Naive thymus-derived CD4-positive, alpha-beta T cell (primary cell): ENCODE measurements at regions of chr9 and their contacts with region 1.

Region 1: GRCh38 chr9:124126571-124127289 is 115.2 kb downstream of the LHX2 start:
- DNase-seq: peak; percentile 23 to 82 (median 58)
- ATAC-seq: peak; percentile 62
- H3K4me3 ChIP-seq: no peak overlapping the region
- H3K4me3 Mint-ChIP-seq: no peak overlapping the region
- H3K27ac ChIP-seq: no peak overlapping the region
- H3K27ac Mint-ChIP-seq: peak overlapping the region in 2 of 9 donors; percentile 28 to 34
- H3K4me1 ChIP-seq: no peaks in the 10 kb centered on the region
- H3K4me1 Mint-ChIP-seq: peaks cover 0 to 6% (median 0%) of the 10 kb centered on the region in 7 donors
- H3K27me3 ChIP-seq: no peaks in the 10 kb centered on the region
- H3K27me3 Mint-ChIP-seq: peaks cover 6 to 12% (median 6%) of the 10 kb centered on the region in 5 donors

Region 2: DNA sequence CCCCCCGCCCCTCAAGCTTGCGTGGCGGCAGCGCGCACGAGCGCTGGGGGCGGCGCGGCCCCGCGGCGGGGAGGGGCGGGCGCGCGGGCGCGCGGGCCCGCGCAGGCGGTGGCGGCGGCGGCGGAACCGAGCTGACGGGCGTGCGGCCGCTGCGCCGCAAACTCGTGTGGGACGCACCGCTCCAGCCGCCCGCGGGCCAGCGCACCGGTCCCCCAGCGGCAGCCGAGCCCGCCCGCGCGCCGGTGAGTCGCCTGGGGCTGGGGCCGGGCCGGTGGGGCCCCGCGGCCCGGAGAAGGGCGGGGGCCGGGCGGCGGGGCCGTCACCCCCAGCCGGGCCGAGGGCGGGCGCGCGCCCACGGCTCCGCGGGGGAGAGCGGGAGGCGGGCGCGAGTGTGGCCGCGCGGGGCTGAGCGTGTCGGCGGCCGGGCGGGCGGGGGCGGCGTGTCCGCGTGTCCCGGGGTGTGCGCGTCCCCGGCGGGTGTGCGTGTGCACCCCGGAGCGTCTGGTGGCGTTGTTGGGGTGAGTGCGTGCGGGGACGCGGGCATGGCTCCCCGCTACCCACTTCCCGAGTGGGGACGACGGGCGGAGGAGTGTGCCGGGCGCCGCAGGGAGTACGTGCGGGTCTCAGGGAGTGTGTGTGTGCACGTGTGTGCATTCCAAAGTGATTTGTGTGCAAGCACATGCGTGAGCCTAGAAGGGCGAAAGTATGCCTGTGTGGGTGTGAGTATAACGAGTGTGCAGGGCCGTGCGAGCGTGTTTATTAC is 131.3 kb after region 1 on chr9 and contains the start of gene NEK6:
- CTCF ChIA-PET with region 1: no interaction called
- POLR2A ChIA-PET with region 1: no interaction called
- intact Hi-C with region 1: loop called in 1 of 2 experiments (anchors 2 kb)
- DNase-seq: peak in 3 of 9 donors; percentile 11 to 63 (median 39)
- ATAC-seq: peak; percentile 73
- H3K4me3 ChIP-seq: peak within 1 kb of the TSS; percentile 51
- H3K4me3 Mint-ChIP-seq: peak within 1 kb of the TSS; percentile 74 to 98 (median 87)
- H3K27ac ChIP-seq: no peak within 1 kb of the TSS
- H3K27ac Mint-ChIP-seq: peak within 1 kb of the TSS in 5 of 9 donors; percentile 8 to 76 (median 64)
- H3K4me1 ChIP-seq: peaks cover 4 to 12% of the 10 kb centered on the region in 2 donors
- H3K4me1 Mint-ChIP-seq: peaks cover 9 to 46% (median 16%) of the 10 kb centered on the region in 7 donors
- H3K27me3 ChIP-seq: no peaks in the 10 kb centered on the region
- H3K27me3 Mint-ChIP-seq: peaks cover 15 to 50% (median 42%) of the 10 kb centered on the region in 5 donors
- total RNA-seq, gene NEK6: 1.9 to 32.8 (median 2.8) TPM

Region 3: GRCh38 chr9:124320062-124320973 is 193.6 kb after region 1 on chr9:
- CTCF ChIA-PET with region 1: no interaction called
- POLR2A ChIA-PET with region 1: no interaction called
- intact Hi-C with region 1: loop called (anchors 1 to 2 kb)
- DNase-seq: peak in 1 of 9 donors; percentile 51
- ATAC-seq: peak; percentile 61
- H3K4me3 ChIP-seq: no peak overlapping the region
- H3K4me3 Mint-ChIP-seq: no peak overlapping the region
- H3K27ac ChIP-seq: no peak overlapping the region
- H3K27ac Mint-ChIP-seq: no peak overlapping the region
- H3K4me1 ChIP-seq: no peaks in the 10 kb centered on the region
- H3K4me1 Mint-ChIP-seq: peaks cover 0 to 3% (median 0%) of the 10 kb centered on the region in 7 donors
- H3K27me3 ChIP-seq: no peaks in the 10 kb centered on the region
- H3K27me3 Mint-ChIP-seq: no peaks in the 10 kb centered on the region

Region 4: GRCh38 chr9:124386201-124386600 is 259.5 kb after region 1 on chr9:
- CTCF ChIA-PET with region 1: no interaction called
- POLR2A ChIA-PET with region 1: no interaction called
- intact Hi-C with region 1: loop called in 1 of 2 experiments (anchors 2 kb)
- DNase-seq: no peak
- ATAC-seq: no peak
- H3K4me3 ChIP-seq: no peak overlapping the region
- H3K4me3 Mint-ChIP-seq: no peak overlapping the region
- H3K27ac ChIP-seq: no peak overlapping the region
- H3K27ac Mint-ChIP-seq: no peak overlapping the region
- H3K4me1 ChIP-seq: no peaks in the 10 kb centered on the region
- H3K4me1 Mint-ChIP-seq: peaks cover 24 to 52% (median 44%) of the 10 kb centered on the region in 7 donors
- H3K27me3 ChIP-seq: no peaks in the 10 kb centered on the region
- H3K27me3 Mint-ChIP-seq: no peaks in the 10 kb centered on the region

Region 5: GRCh38 chr9:124394596-124394995 is 267.9 kb after region 1 on chr9:
- CTCF ChIA-PET with region 1: no interaction called
- POLR2A ChIA-PET with region 1: interaction called, 3 read pairs
- intact Hi-C with region 1: loop called in 1 of 2 experiments (anchors 2 kb)
- DNase-seq: no peak
- ATAC-seq: no peak
- H3K4me3 ChIP-seq: no peak overlapping the region
- H3K4me3 Mint-ChIP-seq: no peak overlapping the region
- H3K27ac ChIP-seq: no peak overlapping the region
- H3K27ac Mint-ChIP-seq: no peak overlapping the region
- H3K4me1 ChIP-seq: no peaks in the 10 kb centered on the region
- H3K4me1 Mint-ChIP-seq: peaks cover 26 to 71% (median 65%) of the 10 kb centered on the region in 7 donors
- H3K27me3 ChIP-seq: no peaks in the 10 kb centered on the region
- H3K27me3 Mint-ChIP-seq: no peaks in the 10 kb centered on the region